ENCODE measurements at regions of chr19 and their contacts with region 1.

Region 1: DNA sequence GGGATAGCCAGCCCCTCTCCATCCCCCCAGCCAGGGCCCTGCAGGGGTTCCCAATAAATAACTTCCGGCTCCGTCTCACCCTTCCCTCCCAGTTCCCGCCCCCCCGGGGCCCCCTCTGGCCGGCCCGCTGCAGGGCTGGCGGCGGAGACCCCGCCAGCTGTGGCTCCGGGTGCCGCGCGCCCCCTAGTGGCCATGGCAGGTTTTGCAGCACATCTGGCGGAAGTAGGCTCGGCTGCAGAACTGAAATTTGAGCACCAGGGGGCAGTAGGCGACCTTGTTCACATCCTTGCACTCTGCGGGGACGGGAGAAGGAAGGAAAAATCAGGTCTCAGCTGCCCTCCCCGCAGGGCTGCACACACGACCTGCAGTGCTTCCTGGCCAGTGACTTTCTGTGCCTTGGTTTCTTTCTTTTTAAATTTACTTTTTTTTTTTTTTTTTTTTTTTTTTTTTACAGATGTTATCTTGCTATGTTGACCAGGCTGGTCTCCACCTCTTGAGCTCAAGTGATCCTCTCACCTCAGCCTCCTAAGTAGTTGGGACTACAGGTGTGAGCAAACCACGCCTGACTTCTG is 3.6 kb upstream of the MYO1F start:
- DNase-seq: peak; percentile 80 to 82
- ATAC-seq: peak; percentile 60 to 77 (median 66)
- H3K4me3 ChIP-seq: no peak overlapping the region
- H3K27ac ChIP-seq: no peak overlapping the region
- H3K4me1 ChIP-seq: peaks cover 0 to 38% (median 10%) of the 10 kb centered on the region in 9 donors
- H3K27me3 ChIP-seq: peaks cover 0 to 27% (median 13%) of the 10 kb centered on the region in 7 donors
- CTCF ChIP-seq: peak; percentile 99 to 100 (median 99)

Region 2: GRCh38 chr19:8641908-8642547 is 61.2 kb after region 1 on chr19:
- intact Hi-C with region 1: loop called in 5 of 10 experiments (anchors 2 to 10 kb)
- DNase-seq: no peak
- ATAC-seq: peak in 1 of 8 donors; percentile 43
- H3K4me3 ChIP-seq: no peak overlapping the region
- H3K27ac ChIP-seq: no peak overlapping the region
- H3K4me1 ChIP-seq: peaks cover 0 to 52% (median 0%) of the 10 kb centered on the region in 9 donors
- H3K27me3 ChIP-seq: peaks cover 0 to 45% (median 19%) of the 10 kb centered on the region in 7 donors
- CTCF ChIP-seq: peak; percentile 24 to 64 (median 51)